ENCODE measurements at regions of chrX and their contacts with region 1.

Region 1: GRCh38 chrX:130268500-130269170 is at the start of gene ZNF280C:
- DNase-seq: peak; percentile 71 to 92 (median 88)
- ATAC-seq: peak; percentile 98
- H3K4me3 ChIP-seq: peak within 1 kb of the TSS; percentile 82
- H3K4me3 Mint-ChIP-seq: peak within 1 kb of the TSS; percentile 86 to 92 (median 89)
- H3K27ac ChIP-seq: peak within 1 kb of the TSS; percentile 77
- H3K27ac Mint-ChIP-seq: peak within 1 kb of the TSS; percentile 59 to 91 (median 82)
- H3K4me1 ChIP-seq: peaks cover 0 to 6% of the 10 kb centered on the region in 2 donors
- H3K4me1 Mint-ChIP-seq: peaks cover 0 to 26% (median 16%) of the 10 kb centered on the region in 7 donors
- H3K27me3 ChIP-seq: no peaks in the 10 kb centered on the region
- H3K27me3 Mint-ChIP-seq: peaks cover 0 to 7% (median 0%) of the 10 kb centered on the region in 5 donors
- total RNA-seq, gene ZNF280C: 3.9 to 5.6 (median 4.4) TPM

Region 2: DNA sequence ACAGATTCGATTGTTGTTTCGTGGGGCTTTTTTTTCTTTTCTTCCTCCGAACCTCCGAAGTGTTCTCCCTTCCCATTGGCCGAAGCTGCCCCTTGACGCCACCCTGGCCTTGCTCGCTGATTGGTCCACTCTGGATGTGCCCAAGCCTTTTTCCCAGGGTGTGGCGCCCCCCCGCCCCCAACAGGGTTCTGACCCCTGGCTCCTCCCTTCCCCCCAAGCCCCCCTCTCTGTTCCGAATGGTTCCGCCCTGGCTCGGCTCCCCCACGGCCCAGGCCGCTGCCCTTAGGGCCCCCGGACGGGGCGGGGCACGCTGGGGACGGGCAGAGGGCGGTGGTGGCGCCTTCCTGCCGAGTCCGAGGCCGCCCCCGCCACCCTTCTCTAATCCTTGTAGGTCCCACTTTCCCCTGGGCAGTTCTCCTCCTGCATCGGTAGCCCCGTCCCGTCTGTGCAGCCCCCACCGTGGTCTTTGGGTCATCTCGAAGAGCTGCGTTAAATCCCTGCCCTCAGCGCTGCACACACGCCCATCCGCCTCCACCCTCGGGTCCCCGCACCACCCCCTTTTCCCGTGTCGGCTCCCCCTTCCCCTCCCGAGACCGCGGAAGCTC is 337.1 kb before region 1 on chrX:
- CTCF ChIA-PET with region 1: no interaction called
- POLR2A ChIA-PET with region 1: no interaction called
- intact Hi-C with region 1: loop called in 1 of 2 experiments (anchors 2 kb)
- DNase-seq: peak; percentile 18 to 58 (median 33)
- ATAC-seq: peak; percentile 75
- H3K4me3 ChIP-seq: peak overlapping the region; percentile 61
- H3K4me3 Mint-ChIP-seq: peak overlapping the region; percentile 66 to 89 (median 80)
- H3K27ac ChIP-seq: peak overlapping the region; percentile 59
- H3K27ac Mint-ChIP-seq: peak overlapping the region; percentile 70 to 92 (median 85)
- H3K4me1 ChIP-seq: no peaks in the 10 kb centered on the region
- H3K4me1 Mint-ChIP-seq: peaks cover 0 to 6% (median 5%) of the 10 kb centered on the region in 7 donors
- H3K27me3 ChIP-seq: no peaks in the 10 kb centered on the region
- H3K27me3 Mint-ChIP-seq: peaks cover 0 to 20% (median 0%) of the 10 kb centered on the region in 5 donors

Region 3: GRCh38 chrX:130091958-130092522 is 176.6 kb before region 1 on chrX:
- CTCF ChIA-PET with region 1: no interaction called
- POLR2A ChIA-PET with region 1: no interaction called
- intact Hi-C with region 1: loop called in 1 of 2 experiments (anchors 2 kb)
- DNase-seq: peak; percentile 46 to 91 (median 87)
- ATAC-seq: peak; percentile 98
- H3K4me3 ChIP-seq: peak overlapping the region; percentile 64
- H3K4me3 Mint-ChIP-seq: peak overlapping the region; percentile 74 to 92 (median 86)
- H3K27ac ChIP-seq: peak overlapping the region; percentile 68
- H3K27ac Mint-ChIP-seq: peak overlapping the region; percentile 89 to 97 (median 95)
- H3K4me1 ChIP-seq: peaks cover 44% of the 10 kb centered on the region in 2 donors
- H3K4me1 Mint-ChIP-seq: peaks cover 13 to 84% (median 52%) of the 10 kb centered on the region in 7 donors
- H3K27me3 ChIP-seq: no peaks in the 10 kb centered on the region
- H3K27me3 Mint-ChIP-seq: no peaks in the 10 kb centered on the region

Region 4: DNA sequence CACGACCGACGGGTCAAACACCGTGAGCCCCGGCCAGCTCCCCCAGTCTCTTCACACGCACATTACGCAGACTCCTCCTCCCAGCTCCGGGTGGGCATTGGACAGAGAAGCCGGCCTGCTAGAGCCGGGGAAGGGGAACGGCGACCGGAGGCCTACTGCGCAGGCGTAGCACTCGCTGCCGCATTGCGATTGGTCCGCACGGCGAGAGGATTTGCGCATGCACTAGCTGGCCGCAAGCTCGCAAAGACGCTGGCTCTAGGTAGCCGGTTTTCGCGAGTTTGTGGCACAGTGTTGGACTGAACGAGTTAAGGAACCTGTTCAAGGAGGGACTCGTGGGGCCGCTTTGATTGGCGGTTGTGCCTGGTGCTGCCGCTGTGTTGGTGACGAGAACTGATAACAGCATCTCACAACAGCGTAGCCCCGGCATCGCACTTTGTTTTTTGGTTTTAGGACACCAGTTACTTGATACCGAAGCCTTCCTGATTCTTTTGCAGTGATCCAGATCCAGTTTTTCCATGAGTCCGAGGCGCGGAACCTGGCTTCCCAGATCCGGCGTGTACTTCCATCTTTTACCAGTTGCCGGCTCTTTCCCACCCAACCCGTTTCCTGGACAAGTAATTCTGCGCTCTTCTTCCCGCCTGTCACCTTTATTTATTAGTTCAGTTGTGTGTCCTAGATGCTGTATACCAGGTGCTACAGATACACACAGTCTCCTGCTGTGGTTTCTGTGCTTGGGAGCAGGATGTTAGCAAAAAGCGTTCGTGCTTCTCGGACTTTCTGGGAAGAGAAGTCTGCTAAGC is 102.7 kb before region 1 on chrX and contains the start of gene AIFM1:
- CTCF ChIA-PET with region 1: no interaction called
- POLR2A ChIA-PET with region 1: no interaction called
- intact Hi-C with region 1: loop called in 1 of 2 experiments (anchors 2 kb)
- DNase-seq: peak; percentile 68 to 90 (median 84)
- ATAC-seq: peak; percentile 94
- H3K4me3 ChIP-seq: peak within 1 kb of the TSS; percentile 87
- H3K4me3 Mint-ChIP-seq: peak within 1 kb of the TSS; percentile 84 to 98 (median 90)
- H3K27ac ChIP-seq: peak within 1 kb of the TSS; percentile 78
- H3K27ac Mint-ChIP-seq: peak within 1 kb of the TSS; percentile 85 to 96 (median 92)
- H3K4me1 ChIP-seq: peaks cover 8 to 10% of the 10 kb centered on the region in 2 donors
- H3K4me1 Mint-ChIP-seq: peaks cover 6 to 41% (median 32%) of the 10 kb centered on the region in 7 donors
- H3K27me3 ChIP-seq: no peaks in the 10 kb centered on the region
- H3K27me3 Mint-ChIP-seq: no peaks in the 10 kb centered on the region
- total RNA-seq, gene AIFM1: 11.6 to 35.8 (median 21.1) TPM

Region 5: GRCh38 chrX:130204647-130205046 is 64.0 kb before region 1 on chrX:
- CTCF ChIA-PET with region 1: no interaction called
- POLR2A ChIA-PET with region 1: no interaction called
- intact Hi-C with region 1: loop called in 1 of 2 experiments (anchors 10 kb)
- DNase-seq: no peak
- ATAC-seq: no peak
- H3K4me3 ChIP-seq: no peak overlapping the region
- H3K4me3 Mint-ChIP-seq: no peak overlapping the region
- H3K27ac ChIP-seq: no peak overlapping the region
- H3K27ac Mint-ChIP-seq: no peak overlapping the region
- H3K4me1 ChIP-seq: no peaks in the 10 kb centered on the region
- H3K4me1 Mint-ChIP-seq: no peaks in the 10 kb centered on the region
- H3K27me3 ChIP-seq: no peaks in the 10 kb centered on the region
- H3K27me3 Mint-ChIP-seq: no peaks in the 10 kb centered on the region

Region 6: DNA sequence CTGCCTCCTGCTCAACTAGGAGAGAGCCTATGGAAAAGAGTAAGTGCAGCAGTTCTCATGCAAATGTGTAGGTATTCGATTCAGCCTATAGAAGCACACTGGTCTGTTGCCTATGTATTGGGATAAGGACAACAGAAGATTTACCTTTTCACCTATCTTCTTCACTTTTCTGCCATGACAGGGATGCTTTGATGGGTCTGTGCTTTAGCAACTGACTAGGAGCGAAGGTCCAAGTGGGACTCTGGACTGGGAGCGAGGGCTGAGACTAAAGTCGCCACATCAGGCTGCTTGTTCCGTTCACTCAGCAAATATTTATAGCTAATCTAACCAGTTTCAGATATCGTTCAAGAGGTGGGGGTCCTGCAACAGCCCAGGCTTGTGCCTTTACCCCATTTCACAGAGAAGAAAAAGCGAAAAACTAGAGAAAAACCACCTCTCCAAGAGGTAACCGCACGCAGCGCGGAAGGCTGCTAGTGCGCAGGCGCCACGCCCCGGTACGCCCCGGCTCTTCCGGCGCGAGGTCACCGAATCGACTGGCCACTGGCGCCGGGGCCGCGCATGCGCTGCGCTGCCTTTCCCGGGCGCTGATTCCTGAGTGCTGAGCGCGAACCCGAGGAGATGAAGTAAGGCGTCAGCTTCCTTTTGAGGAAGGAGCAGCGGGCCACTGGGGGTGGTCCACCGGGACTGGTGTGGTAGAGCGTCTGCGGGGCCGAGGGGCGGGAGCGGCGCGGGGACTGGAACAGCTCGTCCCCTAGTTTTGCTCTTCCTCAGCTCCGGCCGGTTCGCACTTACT is 133.0 kb after region 1 on chrX and contains the start of gene RBMX2:
- CTCF ChIA-PET with region 1: no interaction called
- POLR2A ChIA-PET with region 1: no interaction called
- intact Hi-C with region 1: loop called (anchors 1 kb)
- DNase-seq: peak; percentile 59 to 76 (median 66)
- ATAC-seq: peak; percentile 94
- H3K4me3 ChIP-seq: peak within 1 kb of the TSS; percentile 95
- H3K4me3 Mint-ChIP-seq: peak within 1 kb of the TSS; percentile 83 to 97 (median 94)
- H3K27ac ChIP-seq: peak within 1 kb of the TSS; percentile 79
- H3K27ac Mint-ChIP-seq: peak within 1 kb of the TSS; percentile 80 to 96 (median 94)
- H3K4me1 ChIP-seq: no peaks in the 10 kb centered on the region
- H3K4me1 Mint-ChIP-seq: peaks cover 0 to 28% (median 22%) of the 10 kb centered on the region in 7 donors
- H3K27me3 ChIP-seq: no peaks in the 10 kb centered on the region
- H3K27me3 Mint-ChIP-seq: peaks cover 0 to 11% (median 5%) of the 10 kb centered on the region in 5 donors
- total RNA-seq, gene RBMX2: 15.9 to 31.4 (median 26.4) TPM

Region 7: DNA sequence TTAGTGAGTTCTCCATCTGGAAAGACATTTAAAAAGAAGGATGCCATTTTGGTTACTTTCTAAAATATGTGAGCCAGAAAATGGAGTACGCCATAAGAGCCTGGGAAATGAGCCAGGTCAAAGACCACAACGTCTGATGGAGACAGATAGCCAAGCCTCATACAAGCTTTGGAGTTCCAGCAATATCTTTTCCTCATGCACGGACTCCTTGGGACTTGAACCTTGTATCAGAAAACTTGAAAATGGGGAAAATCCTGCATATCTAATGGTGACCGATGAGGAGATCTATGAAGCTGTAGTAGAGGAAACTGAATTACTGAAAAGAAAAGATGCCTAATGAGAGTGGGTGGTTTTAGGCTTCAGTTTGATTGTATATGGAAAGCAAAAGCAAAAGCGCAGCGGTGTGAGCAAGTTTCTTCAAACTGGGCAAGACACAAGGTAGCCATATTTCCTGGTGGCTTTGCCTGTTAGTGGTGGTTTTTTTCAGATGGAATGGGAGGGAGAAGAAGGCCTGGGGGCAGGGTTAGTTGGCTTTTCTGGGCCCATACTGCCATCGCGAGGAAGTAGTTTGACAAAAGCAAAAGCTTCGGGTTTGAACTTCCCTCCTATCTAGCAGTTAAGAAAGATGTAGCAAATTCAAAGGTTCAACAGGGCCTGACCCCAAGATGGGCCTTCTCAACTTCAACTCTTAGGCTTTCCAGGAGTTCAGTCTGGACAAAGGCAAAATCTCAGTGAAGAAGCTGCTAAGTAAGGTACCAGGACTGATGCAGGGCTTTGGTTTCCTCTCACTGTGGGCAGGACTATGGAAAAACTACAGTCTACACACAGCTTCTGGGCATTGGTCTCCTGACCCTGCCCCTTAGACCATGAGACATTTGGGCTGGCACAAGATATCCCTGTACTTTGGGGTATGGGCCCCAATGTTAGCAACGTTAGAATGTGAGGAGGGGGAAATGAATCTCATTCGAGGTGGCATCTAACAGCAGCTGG is 1544.5 kb after region 1 on chrX:
- CTCF ChIA-PET with region 1: no interaction called
- POLR2A ChIA-PET with region 1: no interaction called
- intact Hi-C with region 1: loop called in 1 of 2 experiments (anchors 5 kb)
- DNase-seq: peak; percentile 36 to 97 (median 95)
- ATAC-seq: peak; percentile 96
- H3K4me3 ChIP-seq: peak overlapping the region; percentile 69
- H3K4me3 Mint-ChIP-seq: peak overlapping the region; percentile 78 to 98 (median 90)
- H3K27ac ChIP-seq: peak overlapping the region; percentile 75
- H3K27ac Mint-ChIP-seq: peak overlapping the region; percentile 92 to 98 (median 95)
- H3K4me1 ChIP-seq: peaks cover 9% of the 10 kb centered on the region in 2 donors
- H3K4me1 Mint-ChIP-seq: peaks cover 2 to 35% (median 28%) of the 10 kb centered on the region in 7 donors
- H3K27me3 ChIP-seq: no peaks in the 10 kb centered on the region
- H3K27me3 Mint-ChIP-seq: no peaks in the 10 kb centered on the region